Caco-2 (cell line): ENCODE measurements at regions of chr7 and their contacts with region 1.

Region 1: DNA sequence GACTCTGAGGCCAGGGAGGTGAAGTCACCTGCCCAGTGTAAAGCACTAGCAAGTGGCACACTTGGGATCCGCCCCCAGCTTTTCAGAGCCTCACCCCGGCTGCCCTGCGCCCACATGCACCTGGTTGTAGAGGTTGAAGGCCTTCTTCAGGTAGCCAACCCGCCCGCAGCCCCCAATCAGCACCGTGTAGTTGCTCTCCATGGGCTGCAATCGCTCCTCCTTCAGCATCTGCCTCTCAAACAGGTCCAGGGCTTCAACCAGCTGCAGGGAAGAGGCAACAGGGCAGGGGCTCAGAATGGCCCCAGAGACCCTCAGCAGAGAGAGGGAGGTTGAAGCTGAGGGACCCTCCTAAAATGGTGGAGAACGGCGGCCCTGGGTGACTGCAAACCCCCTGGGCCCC is 5.4 kb downstream of the PTCD1 start:
- DNase-seq: no peak
- H3K4me3 ChIP-seq: no peak overlapping the region
- H3K4me3 Mint-ChIP-seq: peak overlapping the region; percentile 67
- H3K27ac Mint-ChIP-seq: peak overlapping the region; percentile 92
- H3K4me1 ChIP-seq: peaks cover 72% of the 10 kb centered on the region
- H3K4me1 Mint-ChIP-seq: peaks cover 20% of the 10 kb centered on the region
- H3K27me3 ChIP-seq: no peaks in the 10 kb centered on the region
- H3K27me3 Mint-ChIP-seq: no peaks in the 10 kb centered on the region
- CTCF ChIP-seq: no peak

Region 2: DNA sequence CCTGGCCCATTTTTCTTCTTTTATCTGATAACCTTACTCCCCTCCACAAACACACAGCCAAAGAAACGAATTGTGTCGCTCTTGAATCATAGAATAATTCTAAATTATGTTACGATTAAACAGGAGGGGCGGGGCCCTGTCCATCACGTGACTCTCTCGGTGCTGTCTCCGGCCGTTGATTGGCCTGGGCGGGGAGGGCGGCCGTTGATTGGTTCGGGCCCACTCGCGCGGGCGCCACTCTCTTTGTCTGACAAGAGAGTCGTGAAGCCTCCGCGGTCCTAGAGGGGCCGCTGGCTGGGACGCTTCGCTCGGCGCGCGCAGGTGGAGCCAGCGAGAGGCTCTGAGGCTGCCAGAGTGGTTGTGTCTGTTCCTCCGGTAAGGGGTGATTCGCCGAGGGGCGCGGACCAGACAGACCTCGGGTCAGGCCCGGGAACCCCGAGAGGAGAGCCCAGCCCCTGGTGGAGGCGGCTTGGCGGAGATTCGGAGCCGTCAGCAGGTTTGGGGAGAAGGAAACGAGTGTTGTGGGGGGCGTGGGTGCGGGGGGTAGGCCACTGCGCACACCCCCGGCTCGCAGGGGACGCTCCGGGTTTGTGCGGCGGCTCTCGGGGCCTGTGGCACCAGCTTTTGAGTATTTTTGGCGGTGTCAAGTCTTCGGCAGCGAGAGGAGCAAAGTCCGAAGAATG is 39.5 kb after region 1 on chr7 and contains the start of gene ZNF789:
- CTCF ChIA-PET with region 1: no interaction called
- POLR2A ChIA-PET with region 1: interaction called, 5 read pairs
- intact Hi-C with region 1: loop called (anchors 2 kb)
- DNase-seq: peak; percentile 97 to 98
- H3K4me3 ChIP-seq: peak within 1 kb of the TSS; percentile 94
- H3K4me3 Mint-ChIP-seq: peak within 1 kb of the TSS; percentile 82
- H3K27ac Mint-ChIP-seq: peak within 1 kb of the TSS; percentile 78
- H3K4me1 ChIP-seq: no peaks in the 10 kb centered on the region
- H3K4me1 Mint-ChIP-seq: no peaks in the 10 kb centered on the region
- H3K27me3 ChIP-seq: no peaks in the 10 kb centered on the region
- H3K27me3 Mint-ChIP-seq: no peaks in the 10 kb centered on the region
- CTCF ChIP-seq: no peak
- total RNA-seq, gene ZNF789: 30.1 and 32.3 TPM in 2 replicates